ENCODE measurements at regions of chr3 and their contacts with region 1.

Region 1: DNA sequence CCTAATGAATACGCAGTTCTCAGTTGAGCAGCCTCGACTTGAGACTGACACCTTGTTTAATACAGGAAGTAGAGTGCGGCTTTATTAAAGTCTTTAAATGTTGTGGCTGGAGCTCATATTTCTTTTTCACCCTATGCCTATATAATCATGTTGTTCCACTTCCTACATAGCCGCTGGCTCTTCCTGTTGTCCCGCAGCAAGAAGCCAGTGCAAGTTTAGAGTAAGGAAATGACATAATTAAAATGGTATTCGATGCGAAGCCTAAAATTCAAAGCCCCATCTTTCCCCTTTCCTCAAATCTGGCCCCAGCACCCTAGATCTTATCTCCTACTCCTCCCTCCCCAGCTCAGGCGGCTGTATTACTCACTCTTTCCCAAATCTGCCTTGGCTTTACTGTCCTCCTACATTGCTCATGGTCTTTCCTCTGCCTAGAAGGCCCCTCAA is 7.5 kb upstream of the PHLDB2 start:
- DNase-seq: peak; percentile 87
- H3K4me3 Mint-ChIP-seq: no peak overlapping the region
- H3K27ac Mint-ChIP-seq: peak overlapping the region; percentile 77
- H3K4me1 Mint-ChIP-seq: peaks cover 37% of the 10 kb centered on the region
- H3K27me3 Mint-ChIP-seq: no peaks in the 10 kb centered on the region
- CTCF ChIP-seq: no peak

Region 2: GRCh38 chr3:111810909-111811308 is 40.6 kb before region 1 on chr3:
- CTCF ChIA-PET with region 1: interaction called, 4 read pairs
- POLR2A ChIA-PET with region 1: interaction called, 20 read pairs
- intact Hi-C with region 1: no loop called
- DNase-seq: peak; percentile 86
- H3K4me3 Mint-ChIP-seq: no peak overlapping the region
- H3K27ac Mint-ChIP-seq: peak overlapping the region; percentile 80
- H3K4me1 Mint-ChIP-seq: peaks cover 43% of the 10 kb centered on the region
- H3K27me3 Mint-ChIP-seq: no peaks in the 10 kb centered on the region
- CTCF ChIP-seq: no peak